Esophagus muscularis mucosa (tissue), 4 donors: ENCODE measurements at regions of chr1 and their contacts with region 1.

Region 1: GRCh38 chr1:236603991-236604904 is at the start of gene HEATR1:
- DNase-seq: peak; percentile 98
- H3K4me3 ChIP-seq: peak within 1 kb of the TSS; percentile 76 to 85 (median 82)
- H3K27ac ChIP-seq: peak within 1 kb of the TSS; percentile 83 to 92 (median 86)
- H3K4me1 ChIP-seq: peaks cover 7 to 24% (median 23%) of the 10 kb centered on the region in 4 donors
- H3K27me3 ChIP-seq: peaks cover 0 to 4% (median 0%) of the 10 kb centered on the region in 4 donors
- CTCF ChIP-seq: peak in 1 of 3 experiments; percentile 30
- EP300 ChIP-seq: no peak
- POLR2A ChIP-seq: peak; percentile 53
- total RNA-seq, gene HEATR1: 15.2 to 17.2 (median 16.3) TPM

Region 2: DNA sequence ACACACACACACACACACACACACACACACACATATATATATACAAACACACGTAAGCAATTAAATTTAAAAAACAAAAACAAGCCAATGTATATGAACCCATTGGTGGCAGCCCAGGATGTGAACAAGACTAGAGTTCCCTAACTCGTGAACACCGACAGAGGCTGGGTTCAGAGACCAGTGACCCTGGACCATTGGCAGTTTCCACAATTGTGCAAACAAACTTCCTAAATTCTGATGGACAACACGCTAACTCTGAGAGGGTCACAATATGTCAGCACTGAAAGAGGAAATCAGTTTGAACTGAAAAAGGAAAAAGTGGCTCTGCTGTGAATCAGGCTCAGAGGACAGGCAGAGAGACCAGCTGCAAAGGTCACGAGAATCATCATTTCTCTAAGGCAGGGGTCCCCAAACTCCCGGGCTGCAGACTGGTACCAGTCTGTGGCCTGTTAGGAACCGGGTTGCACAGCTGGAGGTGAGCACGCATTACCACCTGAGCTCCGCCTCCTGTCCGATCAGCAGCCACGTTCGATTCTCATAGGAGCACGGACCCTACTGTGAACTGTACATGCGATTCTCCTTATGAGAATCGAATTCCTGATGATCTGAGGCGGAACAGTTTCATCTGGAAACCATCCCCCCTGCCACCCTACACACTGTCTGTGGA is 272.0 kb before region 1 on chr1:
- intact Hi-C with region 1: no loop called
- DNase-seq: no peak
- H3K4me3 ChIP-seq: no peak overlapping the region
- H3K27ac ChIP-seq: no peak overlapping the region
- H3K4me1 ChIP-seq: no peaks in the 10 kb centered on the region
- H3K27me3 ChIP-seq: no peaks in the 10 kb centered on the region
- CTCF ChIP-seq: no peak
- EP300 ChIP-seq: no peak
- POLR2A ChIP-seq: no peak

Region 3: DNA sequence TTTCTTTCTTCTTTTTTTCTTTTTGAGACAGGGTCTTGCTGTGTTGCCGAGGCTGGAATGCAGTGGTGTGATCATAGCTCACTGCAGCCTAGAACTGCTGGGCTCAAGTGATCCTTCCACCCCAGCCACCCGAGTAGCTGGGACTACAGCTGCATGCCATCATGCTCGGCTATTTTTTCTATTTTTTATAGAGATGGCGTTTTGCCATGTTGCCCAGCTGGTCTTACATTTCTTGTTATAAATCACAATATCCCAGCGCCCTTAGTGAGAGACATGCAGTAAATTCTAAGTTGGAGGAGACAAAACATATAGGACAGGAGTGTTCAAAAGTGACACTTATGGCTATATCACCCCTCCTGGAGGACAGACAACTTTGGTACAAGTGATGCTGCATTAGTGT is 50.7 kb after region 1 on chr1:
- intact Hi-C with region 1: no loop called
- DNase-seq: no peak
- H3K4me3 ChIP-seq: no peak overlapping the region
- H3K27ac ChIP-seq: no peak overlapping the region
- H3K4me1 ChIP-seq: no peaks in the 10 kb centered on the region
- H3K27me3 ChIP-seq: peaks cover 0 to 3% (median 0%) of the 10 kb centered on the region in 4 donors
- CTCF ChIP-seq: no peak
- EP300 ChIP-seq: no peak
- POLR2A ChIP-seq: no peak

Region 4: DNA sequence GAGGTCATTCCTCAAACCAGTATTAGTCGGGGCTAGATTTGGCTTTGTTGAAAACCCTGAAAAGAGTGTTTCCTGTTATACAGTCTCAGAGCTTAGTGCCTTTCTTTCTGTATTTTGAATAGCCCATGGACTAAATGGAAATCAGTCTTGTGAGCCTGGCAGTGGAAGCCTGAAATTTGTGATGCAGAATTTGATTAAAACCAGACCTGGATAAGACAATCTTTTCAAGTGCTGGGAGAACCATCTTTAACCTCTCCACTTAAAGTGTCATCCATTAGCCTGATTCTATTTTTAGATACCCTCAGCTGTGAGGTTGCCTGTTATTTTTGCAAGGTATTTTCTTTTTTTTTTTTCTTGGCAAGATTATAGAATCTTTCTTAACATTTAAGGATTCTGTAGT is 101.5 kb after region 1 on chr1:
- intact Hi-C with region 1: no loop called
- DNase-seq: no peak
- H3K4me3 ChIP-seq: no peak overlapping the region
- H3K27ac ChIP-seq: peak overlapping the region; percentile 9 to 48 (median 36)
- H3K4me1 ChIP-seq: peaks cover 19 to 51% (median 35%) of the 10 kb centered on the region in 4 donors
- H3K27me3 ChIP-seq: no peaks in the 10 kb centered on the region
- CTCF ChIP-seq: no peak
- EP300 ChIP-seq: no peak
- POLR2A ChIP-seq: no peak

Region 5: GRCh38 chr1:236795035-236795756 is 190.9 kb after region 1 on chr1 and contains the start of gene MTR:
- intact Hi-C with region 1: loop called (anchors 10 kb)
- DNase-seq: peak; percentile 100
- H3K4me3 ChIP-seq: peak within 1 kb of the TSS; percentile 68 to 99 (median 88)
- H3K27ac ChIP-seq: peak within 1 kb of the TSS; percentile 93 to 97 (median 95)
- H3K4me1 ChIP-seq: peaks cover 22 to 39% (median 31%) of the 10 kb centered on the region in 4 donors
- H3K27me3 ChIP-seq: no peaks in the 10 kb centered on the region
- CTCF ChIP-seq: peak in 1 of 3 experiments; percentile 19
- EP300 ChIP-seq: no peak
- POLR2A ChIP-seq: no peak
- total RNA-seq, gene MTR: 29.7 to 43.4 (median 34.6) TPM

Region 6: DNA sequence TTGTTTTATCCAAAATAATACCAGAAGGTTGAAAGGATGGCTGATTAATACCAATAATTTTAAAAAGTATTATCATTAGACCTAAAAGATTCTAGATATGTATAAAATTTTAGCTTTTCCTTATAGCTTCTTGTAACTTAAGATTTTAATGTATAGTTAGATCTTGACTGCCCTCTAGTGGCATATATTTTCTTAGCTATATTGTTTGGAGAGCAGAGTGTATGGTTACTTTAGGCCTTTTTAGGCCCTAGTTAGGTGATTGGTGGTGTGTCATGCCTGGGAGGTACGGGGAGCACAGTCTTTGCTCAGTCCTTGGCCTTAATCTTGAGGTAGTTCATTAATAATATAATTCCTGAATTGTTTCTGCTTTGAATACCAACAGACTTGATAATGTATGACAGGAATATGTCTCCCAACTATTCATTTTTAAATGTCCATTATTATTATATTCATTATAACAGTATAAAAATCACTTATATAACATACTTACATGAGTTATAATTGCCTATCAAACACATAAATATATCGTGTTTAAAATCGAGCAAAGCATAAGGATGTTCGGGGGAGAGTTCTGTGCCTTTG is 958.1 kb after region 1 on chr1:
- intact Hi-C with region 1: loop called (anchors 10 kb)
- DNase-seq: no peak
- H3K4me3 ChIP-seq: no peak overlapping the region
- H3K27ac ChIP-seq: no peak overlapping the region
- H3K4me1 ChIP-seq: peaks cover 0 to 11% (median 4%) of the 10 kb centered on the region in 4 donors
- H3K27me3 ChIP-seq: no peaks in the 10 kb centered on the region
- CTCF ChIP-seq: peak; percentile 51 to 63 (median 54)
- EP300 ChIP-seq: no peak
- POLR2A ChIP-seq: no peak